Naive thymus-derived CD8-positive, alpha-beta T cell (primary cell): ENCODE measurements at regions of chr3 and their contacts with region 1.

Region 1: DNA sequence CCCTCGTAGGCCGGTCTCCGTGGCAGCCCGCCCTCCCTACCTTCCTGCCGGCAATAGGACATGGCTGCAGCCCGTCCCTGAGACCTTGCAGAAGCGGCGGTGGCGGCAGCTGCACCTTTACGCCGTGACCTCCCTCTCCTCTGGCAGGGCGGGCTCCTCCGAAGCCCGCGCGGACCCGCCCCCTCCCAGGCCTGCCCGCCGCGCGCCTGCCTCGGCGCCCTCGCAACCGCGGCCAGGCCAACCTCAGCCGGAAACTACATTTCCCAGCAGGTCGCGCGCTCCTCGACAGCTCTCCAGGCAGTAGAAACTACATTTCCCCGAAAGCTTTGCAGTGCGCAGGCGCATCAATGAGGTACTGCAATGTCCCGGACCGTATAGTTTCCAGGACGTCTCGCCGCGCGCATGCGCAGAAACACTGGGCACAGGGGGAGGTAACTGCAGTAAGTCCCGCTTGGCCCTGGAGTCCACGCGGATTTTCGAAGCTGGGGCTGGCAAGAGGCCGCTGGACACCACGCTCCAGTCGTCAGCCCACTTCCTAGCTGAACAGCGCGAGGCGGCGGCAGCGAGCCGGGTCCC is at the starts of genes CHCHD4 and TMEM43:
- DNase-seq: peak; percentile 96 to 100 (median 98)
- ATAC-seq: peak; percentile 88 to 92
- H3K4me3 Mint-ChIP-seq: peak within 1 kb of the TSS; percentile 92 to 97 (median 95)
- H3K27ac Mint-ChIP-seq: peak within 1 kb of the TSS; percentile 87 to 98 (median 96)
- H3K4me1 Mint-ChIP-seq: peaks cover 37 to 76% (median 64%) of the 10 kb centered on the region in 4 donors
- H3K27me3 Mint-ChIP-seq: no peaks in the 10 kb centered on the region
- polyA plus RNA-seq, gene CHCHD4: 6.8 to 15.8 (median 11.5) TPM
- polyA plus RNA-seq, gene TMEM43: 45.6 to 65.0 (median 56.0) TPM

Region 2: GRCh38 chr3:14093831-14094230 is 30.9 kb before region 1 on chr3:
- POLR2A ChIA-PET with region 1: no interaction called
- DNase-seq: no peak
- ATAC-seq: no peak
- H3K4me3 Mint-ChIP-seq: no peak overlapping the region
- H3K27ac Mint-ChIP-seq: no peak overlapping the region
- H3K4me1 Mint-ChIP-seq: no peaks in the 10 kb centered on the region
- H3K27me3 Mint-ChIP-seq: peaks cover 19 to 42% (median 32%) of the 10 kb centered on the region in 5 donors

Region 3: GRCh38 chr3:14144423-14145075 is 19.8 kb after region 1 on chr3:
- POLR2A ChIA-PET with region 1: interaction called, 63 read pairs
- DNase-seq: peak; percentile 34 to 91 (median 75)
- ATAC-seq: peak; percentile 70
- H3K4me3 Mint-ChIP-seq: peak overlapping the region; percentile 33 to 84 (median 70)
- H3K27ac Mint-ChIP-seq: peak overlapping the region; percentile 98 to 100 (median 99)
- H3K4me1 Mint-ChIP-seq: peaks cover 24 to 63% (median 54%) of the 10 kb centered on the region in 4 donors
- H3K27me3 Mint-ChIP-seq: no peaks in the 10 kb centered on the region